Stomach (tissue), 19 donors: ENCODE measurements at regions of chr19 and their contacts with region 1.

Region 1: DNA sequence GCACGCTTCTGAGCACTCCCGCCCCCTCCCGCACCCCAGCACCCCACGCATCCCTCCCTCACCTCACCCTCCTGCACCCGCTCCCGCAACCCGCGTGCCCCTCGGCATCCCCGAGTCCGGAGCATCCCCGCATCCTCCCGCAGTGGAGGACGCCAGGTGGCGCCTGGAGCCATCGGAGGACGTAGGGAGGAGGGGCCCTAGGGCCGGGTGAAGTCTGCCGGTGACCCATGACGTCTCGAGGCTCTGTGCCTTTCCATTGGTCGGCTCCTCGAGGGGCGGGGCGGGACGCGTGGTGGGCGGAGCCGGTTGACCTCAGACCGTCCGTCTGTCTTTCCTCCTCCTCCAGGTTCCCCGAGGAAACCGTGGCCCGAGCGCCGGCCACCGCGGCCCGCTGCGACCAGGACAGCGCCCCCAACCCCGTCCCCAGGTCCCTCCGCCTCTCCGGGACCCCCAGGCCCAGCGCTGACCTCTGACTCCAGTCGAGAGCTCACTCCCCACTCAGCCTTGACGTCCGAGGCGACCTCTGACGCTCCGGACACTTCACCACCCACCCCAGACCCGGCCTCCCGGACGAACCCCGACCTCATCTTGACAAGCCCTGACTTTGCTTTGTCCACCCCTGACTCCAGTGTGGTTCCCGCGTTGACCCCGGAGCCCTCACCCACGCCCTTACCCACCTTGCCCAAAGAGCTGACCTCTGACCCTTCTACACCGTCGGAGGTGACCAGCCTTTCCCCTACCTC is 19.9 kb downstream of the SBK2 start:
- DNase-seq: peak; percentile 97
- H3K4me3 ChIP-seq: peak overlapping the region; percentile 40 to 57 (median 50)
- H3K27ac ChIP-seq: peak overlapping the region; percentile 87 to 93 (median 91)
- H3K4me1 ChIP-seq: peaks cover 8 to 23% (median 18%) of the 10 kb centered on the region in 4 donors
- H3K27me3 ChIP-seq: peaks cover 0 to 7% (median 0%) of the 10 kb centered on the region in 3 donors
- CTCF ChIP-seq: peak in 5 of 7 experiments; percentile 77 to 98 (median 88)
- EP300 ChIP-seq: no peak
- POLR2A ChIP-seq: no peak

Region 2: GRCh38 chr19:55611983-55612645 is 95.1 kb after region 1 on chr19:
- intact Hi-C with region 1: loop called (anchors 5 kb)
- DNase-seq: no peak
- H3K4me3 ChIP-seq: no peak overlapping the region
- H3K27ac ChIP-seq: no peak overlapping the region
- H3K4me1 ChIP-seq: peaks cover 0 to 58% (median 19%) of the 10 kb centered on the region in 4 donors
- H3K27me3 ChIP-seq: no peaks in the 10 kb centered on the region
- CTCF ChIP-seq: no peak
- EP300 ChIP-seq: no peak
- POLR2A ChIP-seq: no peak